ENCODE measurements at regions of chr2 and their contacts with region 1.

Region 1: DNA sequence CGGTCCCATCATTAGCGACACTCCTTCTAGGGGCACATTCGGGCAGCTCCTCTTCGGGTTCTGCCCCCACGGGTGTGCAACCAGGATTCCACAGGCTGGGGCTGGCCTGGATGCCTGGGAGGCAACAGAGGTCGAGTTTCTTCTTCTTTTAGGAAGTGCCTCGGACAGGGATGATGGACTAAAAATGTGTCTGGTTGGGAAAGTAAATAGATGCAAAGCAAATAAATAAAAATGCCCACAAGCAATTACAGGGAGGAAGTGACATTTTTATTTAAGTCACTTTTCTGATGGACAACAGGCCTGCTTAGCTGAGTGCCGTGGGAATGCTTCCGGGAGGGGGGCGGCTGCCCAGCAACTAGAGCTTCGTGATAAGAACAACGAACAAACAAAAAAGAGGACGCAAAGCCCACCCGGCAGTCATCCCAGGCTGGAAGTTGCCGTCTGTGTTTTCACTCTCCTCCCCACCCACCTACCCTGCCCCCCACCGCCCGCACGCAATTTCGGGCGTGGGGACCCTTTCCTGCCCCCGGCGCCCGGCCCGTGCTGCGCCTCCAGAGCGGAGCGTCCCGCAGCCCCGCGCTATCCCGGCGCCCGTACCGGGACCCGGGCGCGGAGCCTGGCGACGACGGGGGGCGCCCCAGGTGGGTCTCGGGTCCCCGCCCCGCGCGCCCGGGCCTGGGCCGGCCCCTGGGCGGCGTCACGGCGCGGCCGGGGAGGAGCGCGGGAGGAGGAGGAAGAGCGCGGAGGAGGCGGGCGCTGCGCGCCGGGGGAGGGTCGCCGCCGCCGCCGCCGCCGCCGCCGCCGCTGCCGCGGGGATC is 412 bp upstream of the NCK2 start:
- DNase-seq: peak in 1 of 2 donors; percentile 76
- H3K4me3 ChIP-seq: peak overlapping the region; percentile 77 to 96
- H3K27ac ChIP-seq: peak overlapping the region; percentile 89 to 94
- H3K4me1 ChIP-seq: peaks cover 7 to 23% of the 10 kb centered on the region in 2 donors
- H3K27me3 ChIP-seq: no peaks in the 10 kb centered on the region
- CTCF ChIP-seq: no peak

Region 2: GRCh38 chr2:105604938-105605337 is 139.4 kb before region 1 on chr2:
- intact Hi-C with region 1: loop called (anchors 5 kb)
- DNase-seq: peak in 1 of 2 donors; percentile 90
- H3K4me3 ChIP-seq: peak overlapping the region in 1 of 2 donors; percentile 21
- H3K27ac ChIP-seq: peak overlapping the region; percentile 58 to 68
- H3K4me1 ChIP-seq: peaks cover 0 to 19% of the 10 kb centered on the region in 2 donors
- H3K27me3 ChIP-seq: no peaks in the 10 kb centered on the region
- CTCF ChIP-seq: no peak

Region 3: GRCh38 chr2:105782123-105782522 is 37.8 kb after region 1 on chr2:
- intact Hi-C with region 1: loop called (anchors 5 kb)
- DNase-seq: no peak
- H3K4me3 ChIP-seq: no peak overlapping the region
- H3K27ac ChIP-seq: no peak overlapping the region
- H3K4me1 ChIP-seq: peaks cover under 1 to 3% of the 10 kb centered on the region in 2 donors
- H3K27me3 ChIP-seq: no peaks in the 10 kb centered on the region
- CTCF ChIP-seq: peak in 1 of 3 experiments; percentile 11

Region 4: GRCh38 chr2:105812180-105813044 is 68.1 kb after region 1 on chr2:
- intact Hi-C with region 1: loop called (anchors 5 kb)
- DNase-seq: no peak
- H3K4me3 ChIP-seq: peak overlapping the region in 1 of 2 donors; percentile 13
- H3K27ac ChIP-seq: peak overlapping the region; percentile 31 to 42
- H3K4me1 ChIP-seq: peaks cover 7 to 27% of the 10 kb centered on the region in 2 donors
- H3K27me3 ChIP-seq: no peaks in the 10 kb centered on the region
- CTCF ChIP-seq: peak in 1 of 3 experiments; percentile 23

Region 5: DNA sequence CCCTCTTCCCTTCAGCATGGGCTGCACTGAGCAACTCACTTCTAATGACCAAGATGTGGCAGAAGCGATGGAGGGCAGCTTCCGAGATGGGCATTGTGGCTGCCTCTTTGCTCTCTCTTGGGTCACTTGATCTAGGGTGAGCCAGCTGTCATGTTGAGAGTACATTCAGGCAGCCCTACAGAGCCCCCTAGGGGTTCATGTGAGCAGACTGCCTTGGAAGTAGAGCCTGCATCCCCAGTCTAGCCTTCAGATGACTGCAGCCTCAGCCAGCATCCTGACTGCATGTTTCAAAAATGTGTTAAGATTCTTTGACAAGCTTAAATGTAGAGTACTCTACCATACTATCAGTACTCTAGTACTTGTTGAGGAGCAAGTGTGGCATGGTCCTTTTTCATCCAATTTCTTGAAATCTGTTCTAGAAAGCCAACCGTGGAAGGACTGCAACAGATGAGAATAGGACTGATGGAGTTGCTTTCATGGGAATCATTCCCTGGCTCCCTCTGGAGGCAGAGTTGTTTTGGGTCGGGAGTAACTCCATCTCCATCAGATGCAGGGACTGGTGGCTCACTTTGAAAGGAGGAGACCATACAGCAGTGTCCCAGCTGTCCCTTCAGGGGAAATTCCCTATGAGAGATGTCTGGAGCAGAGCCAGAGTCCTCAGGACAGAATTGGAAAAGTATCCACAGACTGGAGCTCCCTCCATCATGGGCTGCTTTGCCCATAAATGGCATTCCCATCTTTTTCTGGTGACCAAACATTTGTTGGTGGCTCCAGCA is 144.5 kb after region 1 on chr2:
- intact Hi-C with region 1: loop called (anchors 5 kb)
- DNase-seq: no peak
- H3K4me3 ChIP-seq: no peak overlapping the region
- H3K27ac ChIP-seq: peak overlapping the region; percentile 65 to 69
- H3K4me1 ChIP-seq: peaks cover 0 to 43% of the 10 kb centered on the region in 2 donors
- H3K27me3 ChIP-seq: no peaks in the 10 kb centered on the region
- CTCF ChIP-seq: no peak

Measured in ascending aorta (tissue), 2 donors.